ENCODE measurements at regions of chr1 and their contacts with region 1.

Region 1: GRCh38 chr1:155063550-155064110 is at the start of gene EFNA4:
- DNase-seq: peak; percentile 95
- H3K4me3 ChIP-seq: peak within 1 kb of the TSS; percentile 79 to 92
- H3K27ac ChIP-seq: peak within 1 kb of the TSS; percentile 83 to 85
- H3K4me1 ChIP-seq: peaks cover 0 to 25% of the 10 kb centered on the region in 2 experiments; a peak in 2 of 4 replicates
- H3K27me3 ChIP-seq: no peaks in the 10 kb centered on the region
- CTCF ChIP-seq: no peak
- EP300 ChIP-seq: no peak
- RAD21 ChIP-seq: no peak
- polyA plus RNA-seq, gene EFNA4: 15.9 and 17.7 TPM in 2 replicates

Region 2: DNA sequence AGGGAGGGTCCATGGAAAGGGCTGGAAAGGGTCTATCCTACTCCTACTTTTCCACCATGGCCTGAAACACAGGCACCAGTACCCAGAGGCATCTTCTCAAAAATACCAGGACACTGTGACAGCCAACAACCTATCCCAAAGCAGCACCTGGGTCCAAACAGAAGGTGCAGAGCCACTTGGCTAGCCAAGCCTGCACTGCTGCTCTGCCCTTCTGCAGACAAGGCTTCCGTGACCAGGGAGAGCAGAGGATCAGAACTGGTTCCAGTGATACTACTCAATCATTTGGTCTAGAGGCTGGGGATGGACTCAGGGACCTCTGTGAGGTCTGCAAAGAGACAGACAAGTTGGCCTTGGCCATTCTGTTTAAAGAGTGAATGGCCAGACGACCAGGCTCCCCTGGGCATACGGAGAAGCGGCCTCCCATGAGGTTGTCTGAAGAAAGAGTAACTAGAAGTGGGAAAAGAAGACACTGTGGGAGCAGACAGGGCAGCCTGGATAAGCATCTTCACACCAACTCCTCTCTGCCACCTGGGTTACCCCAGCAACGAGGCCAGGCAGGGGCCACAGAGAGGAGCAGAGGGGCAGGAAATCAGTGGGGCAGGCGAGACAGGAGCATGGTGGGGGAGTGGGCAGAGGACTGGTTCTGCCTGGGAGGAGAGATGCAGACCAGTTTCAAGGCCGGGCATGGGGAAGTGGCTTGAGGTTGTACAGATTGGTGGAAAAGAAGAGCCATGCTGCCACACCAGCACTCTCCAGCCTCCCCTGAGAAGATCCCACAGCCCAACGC is 199.2 kb before region 1 on chr1:
- CTCF ChIA-PET with region 1: no interaction called
- POLR2A ChIA-PET with region 1: no interaction called
- DNase-seq: no peak
- H3K4me3 ChIP-seq: no peak overlapping the region
- H3K27ac ChIP-seq: no peak overlapping the region
- H3K4me1 ChIP-seq: peaks cover 8 to 36% of the 10 kb centered on the region in 2 experiments; a peak in 3 of 4 replicates
- H3K27me3 ChIP-seq: peaks cover 8% of the 10 kb centered on the region; the same call in 1 of the 2 replicates
- CTCF ChIP-seq: no peak
- EP300 ChIP-seq: no peak
- RAD21 ChIP-seq: no peak

Region 3: DNA sequence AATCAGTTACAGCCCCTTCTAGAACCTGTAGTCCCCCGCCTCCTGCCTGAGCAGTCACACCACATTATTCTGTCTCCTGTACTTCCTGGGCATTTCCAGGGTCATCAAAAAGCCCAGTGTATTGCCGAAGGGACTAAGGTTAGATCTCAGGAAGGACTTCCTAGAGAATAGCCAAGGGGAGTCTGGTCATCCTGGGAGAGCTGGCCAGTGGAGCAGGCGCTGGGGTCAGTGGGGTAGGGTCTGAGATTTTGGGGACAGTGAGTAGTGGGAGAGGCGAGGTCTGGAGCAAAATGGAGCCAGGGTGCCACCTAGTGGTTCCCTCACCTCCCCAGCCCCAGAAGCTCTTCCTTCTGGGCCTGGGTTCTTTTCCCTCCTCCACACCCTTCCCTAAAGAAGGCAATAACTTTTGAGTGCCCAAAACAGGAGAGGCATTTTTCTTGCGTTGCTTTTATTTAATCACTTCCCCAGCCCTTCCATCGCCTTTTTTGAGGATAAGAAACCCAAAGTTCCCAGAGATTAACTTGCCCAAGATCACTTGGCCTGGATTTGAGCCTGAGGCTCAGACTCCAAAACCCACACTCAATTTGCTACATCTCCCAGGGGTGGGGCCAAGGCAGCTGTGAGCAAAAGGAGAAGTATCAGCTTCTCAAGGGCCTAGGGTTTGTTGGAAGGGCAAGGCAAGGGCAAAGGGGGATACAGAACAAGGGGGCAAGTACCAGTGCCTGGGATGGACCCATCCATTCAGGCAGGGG is 119.8 kb before region 1 on chr1:
- CTCF ChIA-PET with region 1: interaction called, 14 read pairs
- POLR2A ChIA-PET with region 1: no interaction called
- DNase-seq: peak; percentile 83
- H3K4me3 ChIP-seq: no peak overlapping the region
- H3K27ac ChIP-seq: no peak overlapping the region
- H3K4me1 ChIP-seq: peaks cover 4 to 25% of the 10 kb centered on the region in 2 experiments; a peak in 2 of 4 replicates
- H3K27me3 ChIP-seq: no peaks in the 10 kb centered on the region
- CTCF ChIP-seq: peak; percentile 82
- EP300 ChIP-seq: no peak
- RAD21 ChIP-seq: peak; percentile 80

Region 4: DNA sequence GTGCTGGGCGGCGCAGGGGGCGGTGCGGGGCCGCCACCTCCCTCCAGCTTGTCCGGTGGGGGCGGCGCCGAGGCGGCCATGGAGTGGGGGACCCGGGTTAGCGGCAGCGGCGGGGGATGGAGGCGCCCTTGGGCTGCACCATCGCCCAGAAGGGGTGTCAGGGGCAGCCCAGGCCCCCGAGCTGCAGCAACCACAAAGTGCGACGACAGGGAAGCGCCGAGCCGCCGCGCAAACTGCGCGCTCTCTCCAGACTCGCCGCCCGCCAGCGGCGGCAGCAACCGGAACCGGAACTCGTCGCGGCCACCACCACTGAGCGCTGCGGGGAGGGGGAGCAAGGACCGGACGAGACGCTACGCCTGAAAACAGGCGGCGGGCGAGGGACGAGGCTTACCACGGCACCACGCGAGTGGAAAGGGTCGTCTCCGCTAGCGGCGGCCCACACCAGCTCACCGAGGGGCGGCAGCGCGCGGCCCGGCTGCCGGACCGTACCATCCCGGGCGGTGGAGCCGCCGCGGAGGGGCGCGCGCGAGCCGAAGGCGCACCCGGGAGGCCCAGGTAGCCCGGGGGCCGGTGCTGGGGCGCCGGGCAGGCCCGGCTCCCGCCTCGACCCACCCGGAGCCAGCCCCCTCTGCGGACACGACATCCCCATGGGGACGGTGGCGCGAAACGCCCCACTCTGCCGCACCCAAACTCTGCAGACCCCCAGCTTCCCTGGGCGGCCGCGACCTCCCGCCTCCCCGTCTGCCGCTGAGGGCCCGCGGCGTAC is 102.0 kb before region 1 on chr1 and contains the start of gene PYGO2:
- CTCF ChIA-PET with region 1: interaction called, 13 read pairs
- POLR2A ChIA-PET with region 1: no interaction called
- DNase-seq: peak; percentile 93
- H3K4me3 ChIP-seq: peak within 1 kb of the TSS; percentile 72 to 73
- H3K27ac ChIP-seq: peak within 1 kb of the TSS; percentile 83 to 98
- H3K4me1 ChIP-seq: peaks cover 4 to 36% of the 10 kb centered on the region in 2 experiments; a peak in 3 of 4 replicates
- H3K27me3 ChIP-seq: no peaks in the 10 kb centered on the region
- CTCF ChIP-seq: peak; percentile 69
- EP300 ChIP-seq: 0 out of 4 replicates have a peak, but pooled peaks of 1 of the 2 experiments have one; percentile 26
- RAD21 ChIP-seq: peak; percentile 46
- polyA plus RNA-seq, gene PYGO2: 23.3 and 28.2 TPM in 2 replicates

Region 5: DNA sequence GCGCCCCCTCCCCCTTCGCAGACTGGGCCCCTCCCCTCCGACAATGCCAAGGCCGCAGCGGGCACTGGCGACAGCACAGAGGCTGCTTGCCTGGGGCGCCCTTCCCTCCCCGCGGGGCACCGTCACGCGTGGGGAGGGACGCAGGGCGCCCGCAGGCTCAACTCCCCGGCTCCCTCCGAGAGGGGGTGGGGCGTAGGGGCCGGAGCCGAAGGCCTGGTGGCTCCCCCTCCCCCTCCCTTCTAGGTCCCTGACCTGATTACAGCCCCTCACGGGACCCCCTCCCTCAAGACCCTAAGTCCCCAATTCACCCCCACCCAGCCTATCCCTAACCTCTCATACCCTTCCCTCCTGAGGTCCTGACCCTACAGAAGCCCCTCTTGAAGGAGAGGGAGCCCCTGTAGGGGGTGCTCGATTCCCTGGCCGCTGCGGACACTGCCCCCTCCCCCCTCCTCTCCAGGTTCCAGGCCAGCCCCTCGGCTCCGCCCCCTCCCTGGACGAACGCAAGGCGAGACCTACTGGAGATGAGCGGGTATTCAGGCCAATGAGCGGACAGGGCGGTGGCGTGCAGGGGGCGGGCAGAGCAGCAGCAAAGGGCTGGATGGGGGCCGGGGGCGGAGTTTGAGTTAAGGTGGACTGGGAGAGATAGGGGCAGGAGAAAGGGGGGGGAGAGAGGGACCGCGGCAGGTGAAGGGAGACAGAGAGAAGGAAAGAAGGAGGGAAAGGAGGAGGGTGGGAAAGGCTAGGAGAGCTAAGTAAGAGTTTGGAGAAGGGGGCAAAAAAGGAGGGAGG is 61.8 kb before region 1 on chr1:
- CTCF ChIA-PET with region 1: interaction called, 14 read pairs
- POLR2A ChIA-PET with region 1: no interaction called
- DNase-seq: peak; percentile 96
- H3K4me3 ChIP-seq: peak overlapping the region; percentile 57 to 71
- H3K27ac ChIP-seq: peak overlapping the region; percentile 92 to 96
- H3K4me1 ChIP-seq: peaks cover 19 to 33% of the 10 kb centered on the region in 2 experiments
- H3K27me3 ChIP-seq: no peaks in the 10 kb centered on the region
- CTCF ChIP-seq: peak; percentile 69
- EP300 ChIP-seq: no peak
- RAD21 ChIP-seq: no peak

Region 6: DNA sequence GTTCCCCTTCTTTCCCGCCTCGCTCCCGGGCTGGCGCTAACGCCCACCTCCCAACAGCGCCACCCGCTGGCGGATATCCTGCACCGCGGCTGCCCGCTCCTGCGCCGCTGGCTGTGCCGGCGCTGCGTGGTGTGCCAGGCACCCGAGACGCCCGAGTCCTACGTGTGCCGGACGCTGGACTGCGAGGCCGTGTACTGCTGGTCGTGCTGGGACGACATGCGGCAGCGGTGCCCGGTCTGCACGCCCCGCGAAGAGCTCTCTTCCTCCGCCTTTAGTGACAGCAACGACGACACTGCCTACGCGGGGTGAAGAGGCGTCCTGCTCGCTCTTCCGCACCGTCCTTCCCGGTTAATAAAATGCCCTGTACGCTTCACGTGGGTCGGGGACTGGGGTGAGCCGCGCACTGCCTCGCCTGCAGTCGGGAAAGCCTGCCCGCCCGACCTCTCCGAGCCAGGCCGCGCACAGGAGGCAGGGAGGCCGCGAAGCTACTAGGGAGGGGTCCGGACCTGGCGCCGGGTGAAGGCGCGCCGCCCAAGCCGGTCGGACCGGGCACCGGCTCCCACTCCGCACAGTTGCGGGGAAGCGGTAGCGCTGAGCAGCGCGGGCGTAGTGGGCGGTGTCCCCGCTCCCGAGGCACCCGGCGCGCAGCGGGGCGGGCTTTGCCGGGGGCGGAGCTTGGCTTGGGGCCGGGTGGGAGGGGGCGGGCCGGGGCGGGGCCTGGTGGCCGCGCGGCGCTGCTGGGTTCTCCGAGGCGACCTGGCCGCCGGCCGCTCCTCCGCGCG is 12.9 kb before region 1 on chr1 and contains the start of gene ADAM15:
- CTCF ChIA-PET with region 1: interaction called, 573 read pairs
- POLR2A ChIA-PET with region 1: interaction called, 3 read pairs
- DNase-seq: peak; percentile 99
- H3K4me3 ChIP-seq: peak within 1 kb of the TSS; percentile 84 to 98
- H3K27ac ChIP-seq: peak within 1 kb of the TSS; percentile 61 to 92
- H3K4me1 ChIP-seq: peaks cover 7 to 42% of the 10 kb centered on the region in 2 experiments
- H3K27me3 ChIP-seq: no peaks in the 10 kb centered on the region
- CTCF ChIP-seq: peak; percentile 88
- EP300 ChIP-seq: no peak
- RAD21 ChIP-seq: peak; percentile 40
- polyA plus RNA-seq, gene ADAM15: 60.1 and 64.1 TPM in 2 replicates

Region 7: DNA sequence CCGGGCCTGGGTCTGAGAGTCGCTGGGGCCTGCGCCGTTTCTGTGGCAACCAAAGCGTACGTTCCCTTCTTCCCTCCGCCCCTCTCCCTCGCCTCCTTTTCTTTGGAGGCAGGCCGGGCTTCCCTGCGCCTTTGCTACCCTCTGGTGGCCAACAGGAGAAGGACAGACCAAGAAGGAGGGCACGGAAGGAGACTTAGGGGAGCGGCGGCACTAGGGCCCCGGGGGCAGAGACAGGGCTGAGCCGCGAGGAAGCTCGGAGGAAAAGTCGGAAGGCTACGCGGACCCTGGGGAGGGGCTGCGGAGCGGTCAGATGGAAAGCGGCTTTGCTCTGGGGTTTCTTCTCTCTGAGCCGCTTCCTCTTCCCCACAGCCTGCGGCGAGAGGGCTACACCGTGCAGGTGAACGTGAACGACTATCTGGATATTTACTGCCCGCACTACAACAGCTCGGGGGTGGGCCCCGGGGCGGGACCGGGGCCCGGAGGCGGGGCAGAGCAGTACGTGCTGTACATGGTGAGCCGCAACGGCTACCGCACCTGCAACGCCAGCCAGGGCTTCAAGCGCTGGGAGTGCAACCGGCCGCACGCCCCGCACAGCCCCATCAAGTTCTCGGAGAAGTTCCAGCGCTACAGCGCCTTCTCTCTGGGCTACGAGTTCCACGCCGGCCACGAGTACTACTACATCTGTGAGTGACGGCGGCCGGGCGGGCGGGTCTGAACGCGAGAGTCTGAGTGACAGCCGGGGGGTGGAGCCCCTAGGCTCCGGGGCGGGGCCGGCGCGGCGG is 21.3 kb after region 1 on chr1:
- CTCF ChIA-PET with region 1: interaction called, 116 read pairs
- POLR2A ChIA-PET with region 1: interaction called, 5 read pairs
- DNase-seq: peak; percentile 94
- H3K4me3 ChIP-seq: peak overlapping the region; percentile 77 to 79
- H3K27ac ChIP-seq: peak overlapping the region; percentile 69 to 94
- H3K4me1 ChIP-seq: peaks cover 13 to 26% of the 10 kb centered on the region in 2 experiments; a peak in 3 of 4 replicates
- H3K27me3 ChIP-seq: peaks cover 15% of the 10 kb centered on the region
- CTCF ChIP-seq: peak; percentile 82
- EP300 ChIP-seq: peak in 1 of 2 experiments; percentile 26; a peak in 1 of 4 replicates
- RAD21 ChIP-seq: peak; percentile 96

Region 8: GRCh38 chr1:155099331-155099730 is 35.7 kb after region 1 on chr1:
- CTCF ChIA-PET with region 1: no interaction called
- POLR2A ChIA-PET with region 1: no interaction called
- DNase-seq: no peak
- H3K4me3 ChIP-seq: no peak overlapping the region
- H3K27ac ChIP-seq: no peak overlapping the region
- H3K4me1 ChIP-seq: peaks cover 0 to 2% of the 10 kb centered on the region in 2 experiments; a peak in 1 of 4 replicates
- H3K27me3 ChIP-seq: no peaks in the 10 kb centered on the region
- CTCF ChIP-seq: no peak
- EP300 ChIP-seq: no peak
- RAD21 ChIP-seq: no peak

Measured in SK-N-SH (cell line).